Dendritic cell treated with granulocyte-macrophage colony-stimulating factor and Interleukin-4, amounts not matched to agents 40 ng/mL and 50 ng/mL, for 4 days (primary cell): ENCODE measurements at regions of chr4 and their contacts with region 1.

Region 1: DNA sequence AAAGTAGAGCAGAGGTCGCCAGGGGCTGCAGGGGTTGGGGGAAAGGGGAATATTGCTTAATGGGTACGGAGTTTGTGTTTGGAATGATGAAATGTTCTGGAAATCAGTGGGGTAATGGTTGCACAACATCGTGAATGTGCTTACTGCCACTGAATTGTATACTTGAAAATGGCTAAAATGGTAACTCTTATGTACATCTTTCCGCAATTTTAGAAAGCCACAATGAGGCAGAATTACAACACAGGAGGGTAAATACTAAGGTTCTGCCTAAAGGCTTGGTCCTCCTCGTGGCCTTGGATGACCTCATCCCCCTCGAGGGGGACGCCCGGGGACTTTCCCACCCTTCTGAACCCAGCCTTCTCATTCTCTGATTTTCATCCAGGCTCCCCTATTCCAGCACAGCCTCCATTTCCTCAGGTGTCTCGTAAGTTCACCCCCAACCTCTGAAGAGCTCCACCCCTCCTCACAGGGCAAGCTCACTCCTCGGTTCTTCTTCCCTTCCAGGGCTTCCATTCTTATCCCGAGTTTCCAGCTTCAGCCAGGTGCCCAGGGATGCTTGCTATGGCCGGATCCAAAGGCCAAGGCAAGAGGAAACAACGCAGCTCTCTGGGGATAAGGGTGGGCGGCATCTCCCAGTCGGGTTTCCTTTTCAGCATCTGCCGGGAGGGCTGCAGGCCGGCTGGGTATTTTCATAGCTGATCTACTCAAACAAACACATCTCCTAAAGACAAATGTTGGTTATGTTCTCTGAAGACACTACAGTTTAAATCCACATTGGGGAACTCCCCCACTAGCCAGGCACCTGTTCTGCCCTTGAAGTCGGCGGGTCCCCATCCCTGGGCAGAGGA is 71.3 kb upstream of the ACSL1 start:
- H3K4me3 Mint-ChIP-seq: no peak overlapping the region
- H3K27ac Mint-ChIP-seq: no peak overlapping the region
- H3K4me1 Mint-ChIP-seq: peaks cover 57% of the 10 kb centered on the region
- H3K27me3 Mint-ChIP-seq: peaks cover 2% of the 10 kb centered on the region

Region 2: DNA sequence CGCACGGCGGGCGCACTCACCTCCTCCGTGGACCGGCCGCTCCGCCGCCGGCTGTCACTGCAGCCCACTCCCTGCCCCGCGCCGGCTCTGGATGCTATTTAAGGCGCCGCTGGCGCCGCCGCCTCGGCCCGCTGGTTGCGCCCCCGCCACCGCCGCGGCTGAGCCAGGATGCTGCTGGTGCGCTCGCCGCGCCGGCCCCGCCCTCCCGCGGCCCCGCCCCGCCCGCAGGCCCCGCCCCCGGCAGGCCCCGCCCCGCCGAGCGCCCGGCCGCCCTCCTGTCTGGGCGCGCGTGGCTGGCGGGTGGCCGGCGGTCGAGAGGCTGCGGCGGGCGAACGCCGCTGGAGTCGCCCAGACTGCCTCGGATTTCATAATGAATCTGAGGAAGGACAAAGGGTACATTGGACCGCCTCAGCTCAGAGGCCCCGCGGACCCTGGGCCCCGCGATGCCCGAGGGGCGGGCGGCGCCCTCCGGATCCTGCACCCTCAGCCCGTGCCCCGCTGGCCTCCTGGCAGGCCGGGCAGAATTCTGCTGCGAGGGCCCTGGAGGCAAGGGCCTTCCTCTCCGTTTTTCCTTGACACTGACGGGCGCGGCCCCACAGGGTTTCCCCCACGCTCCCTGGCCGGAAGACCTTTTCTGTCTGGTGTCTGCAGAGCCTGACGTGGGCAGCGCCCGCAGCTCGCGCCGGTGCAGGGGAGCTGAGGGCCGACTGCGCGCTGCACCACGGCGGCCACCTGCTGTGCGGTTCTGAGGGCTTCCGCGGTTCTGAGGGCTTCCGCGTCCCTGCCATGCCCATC is 71.0 kb before region 1 on chr4 and contains the start of gene ACSL1:
- intact Hi-C with region 1: loop called (anchors 5 kb)
- H3K4me3 Mint-ChIP-seq: peak within 1 kb of the TSS; percentile 89
- H3K27ac Mint-ChIP-seq: peak within 1 kb of the TSS; percentile 87
- H3K4me1 Mint-ChIP-seq: peaks cover 51% of the 10 kb centered on the region
- H3K27me3 Mint-ChIP-seq: peaks cover 3% of the 10 kb centered on the region

Region 3: DNA sequence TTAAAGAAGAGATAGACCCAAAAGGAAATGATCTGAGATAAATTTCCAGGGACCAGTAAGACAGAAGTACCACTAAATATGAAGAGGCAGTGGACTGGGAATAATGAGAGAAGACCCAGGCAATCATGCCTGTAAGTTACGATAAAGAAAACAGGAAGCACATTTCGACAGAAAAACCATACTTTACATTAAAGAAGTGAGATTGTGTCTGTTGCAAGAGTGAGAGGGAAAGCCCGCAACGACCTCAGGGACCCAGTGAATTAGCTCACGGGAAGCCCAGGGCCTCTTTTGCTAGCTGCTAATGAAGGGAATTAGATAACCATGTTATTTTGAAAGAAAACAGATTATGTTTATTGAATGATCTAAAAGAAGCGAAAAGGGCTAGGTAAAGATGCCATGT is 42.4 kb before region 1 on chr4:
- intact Hi-C with region 1: loop called (anchors 5 kb)
- H3K4me3 Mint-ChIP-seq: peak overlapping the region; percentile 9
- H3K27ac Mint-ChIP-seq: peak overlapping the region; percentile 71
- H3K4me1 Mint-ChIP-seq: peaks cover 31% of the 10 kb centered on the region
- H3K27me3 Mint-ChIP-seq: no peaks in the 10 kb centered on the region